Transverse colon (tissue), 4 donors: ENCODE measurements at regions of chr1 and their contacts with region 1.

Region 1: GRCh38 chr1:101587741-101588140 is 350.9 kb downstream of the S1PR1 start:
- DNase-seq: peak; percentile 29
- H3K4me3 ChIP-seq: no peak overlapping the region
- H3K27ac ChIP-seq: no peak overlapping the region
- H3K4me1 ChIP-seq: no peaks in the 10 kb centered on the region
- H3K27me3 ChIP-seq: no peaks in the 10 kb centered on the region
- CTCF ChIP-seq: no peak
- EP300 ChIP-seq: no peak
- POLR2A ChIP-seq: no peak

Region 2: GRCh38 chr1:101846820-101847219 is 259.1 kb after region 1 on chr1:
- in situ Hi-C with region 1: no loop called
- intact Hi-C with region 1: loop called (anchors 10 kb)
- DNase-seq: no peak
- H3K4me3 ChIP-seq: no peak overlapping the region
- H3K27ac ChIP-seq: no peak overlapping the region
- H3K4me1 ChIP-seq: no peaks in the 10 kb centered on the region
- H3K27me3 ChIP-seq: no peaks in the 10 kb centered on the region
- CTCF ChIP-seq: no peak
- EP300 ChIP-seq: no peak
- POLR2A ChIP-seq: no peak